Prostate gland (tissue), 2 donors: ENCODE measurements at regions of chr3 and their contacts with region 1.

Region 1: GRCh38 chr3:5057857-5058324 is 64.2 kb upstream of the ARL8B start:
- DNase-seq: peak; percentile 79
- H3K4me3 ChIP-seq: no peak overlapping the region
- H3K27ac ChIP-seq: no peak overlapping the region
- H3K4me1 ChIP-seq: no peaks in the 10 kb centered on the region
- H3K27me3 ChIP-seq: no peaks in the 10 kb centered on the region
- CTCF ChIP-seq: peak; percentile 24 to 84 (median 78)
- POLR2A ChIP-seq: no peak

Region 2: DNA sequence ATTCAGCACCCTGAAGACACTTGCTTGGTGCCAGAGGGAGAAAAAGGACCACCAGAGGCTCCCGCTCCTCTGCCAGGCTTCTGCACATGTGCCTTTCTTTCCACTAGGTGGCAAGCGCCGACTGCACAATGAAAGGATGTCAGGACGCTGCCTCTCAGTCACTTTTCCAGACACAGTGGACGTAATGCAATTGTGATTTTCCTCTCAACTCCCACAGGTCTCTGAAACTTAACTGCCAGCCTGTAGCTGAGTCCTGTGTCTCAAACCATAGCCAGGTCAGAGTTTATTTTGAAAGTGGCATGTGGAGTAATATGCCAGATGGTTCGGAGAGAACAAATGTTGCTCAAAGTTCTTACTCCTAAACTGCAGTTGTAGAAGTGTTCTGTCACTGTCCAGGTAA is 401.8 kb before region 1 on chr3:
- intact Hi-C with region 1: loop called (anchors 5 kb)
- DNase-seq: peak; percentile 46
- H3K4me3 ChIP-seq: no peak overlapping the region
- H3K27ac ChIP-seq: peak overlapping the region in 1 of 2 donors; percentile 35
- H3K4me1 ChIP-seq: no peaks in the 10 kb centered on the region
- H3K27me3 ChIP-seq: no peaks in the 10 kb centered on the region
- CTCF ChIP-seq: peak; percentile 48 to 81 (median 73)
- POLR2A ChIP-seq: no peak

Region 3: GRCh38 chr3:4712143-4712542 is 345.7 kb before region 1 on chr3:
- intact Hi-C with region 1: loop called (anchors 5 kb)
- DNase-seq: peak; percentile 76
- H3K4me3 ChIP-seq: no peak overlapping the region
- H3K27ac ChIP-seq: peak overlapping the region; percentile 26 to 65
- H3K4me1 ChIP-seq: no peaks in the 10 kb centered on the region
- H3K27me3 ChIP-seq: no peaks in the 10 kb centered on the region
- CTCF ChIP-seq: no peak
- POLR2A ChIP-seq: no peak

Region 4: GRCh38 chr3:5187156-5187919 is 129.4 kb after region 1 on chr3 and contains the start of gene EDEM1:
- intact Hi-C with region 1: no loop called
- DNase-seq: peak; percentile 93
- H3K4me3 ChIP-seq: peak within 1 kb of the TSS; percentile 95 to 96
- H3K27ac ChIP-seq: peak within 1 kb of the TSS; percentile 90 to 92
- H3K4me1 ChIP-seq: no peaks in the 10 kb centered on the region
- H3K27me3 ChIP-seq: no peaks in the 10 kb centered on the region
- CTCF ChIP-seq: no peak
- POLR2A ChIP-seq: peak; percentile 93
- total RNA-seq, gene EDEM1: 40.5 to 63.1 TPM